Ovary (tissue), 10 donors: ENCODE measurements at regions of chr16 and their contacts with region 1.

Region 1: DNA sequence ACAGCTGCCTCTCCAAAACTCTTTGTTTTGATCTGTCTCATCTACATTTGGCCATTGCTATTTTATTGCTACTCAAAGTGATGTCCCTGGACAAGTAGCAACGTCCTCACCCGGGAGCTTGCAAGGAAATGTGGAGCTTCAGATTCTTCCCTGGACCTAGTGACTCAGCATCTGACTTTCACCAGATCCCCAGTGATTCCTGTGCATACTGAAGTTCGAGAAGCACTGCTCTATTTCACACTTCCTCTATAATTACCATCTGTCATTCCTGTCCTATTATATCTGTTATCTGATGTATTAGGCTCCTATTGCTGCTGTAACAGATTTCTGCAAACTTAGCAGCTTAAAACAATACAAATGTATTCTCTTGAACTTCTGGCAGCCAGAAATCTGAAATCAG is 28.5 kb upstream of the VAT1L start:
- DNase-seq: no peak
- H3K4me3 ChIP-seq: no peak overlapping the region
- H3K27ac ChIP-seq: no peak overlapping the region
- H3K4me1 ChIP-seq: peaks cover 9% of the 10 kb centered on the region
- H3K27me3 ChIP-seq: no peaks in the 10 kb centered on the region
- CTCF ChIP-seq: no peak
- EP300 ChIP-seq: no peak
- POLR2A ChIP-seq: no peak

Region 2: DNA sequence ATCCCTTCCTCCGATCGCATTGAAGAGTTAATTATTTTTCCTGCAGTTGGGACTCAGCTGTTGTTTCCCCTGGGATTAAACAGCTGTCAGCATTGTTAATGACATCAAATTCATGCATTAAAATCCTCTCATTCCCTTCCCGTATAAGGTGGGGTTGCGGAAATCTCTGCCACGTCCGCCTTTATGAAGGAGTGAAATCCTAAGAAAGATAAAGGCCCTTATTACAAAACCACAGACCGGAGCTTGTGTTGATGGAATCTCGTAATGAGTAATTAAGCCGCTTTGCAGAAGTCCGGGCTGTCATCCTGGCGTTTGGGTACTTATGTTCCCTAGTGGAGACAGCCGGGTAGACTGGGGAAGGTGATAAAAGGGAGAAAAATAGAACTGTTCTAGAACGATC is 1213.2 kb after region 1 on chr16:
- intact Hi-C with region 1: loop called in 1 of 4 experiments (anchors 10 kb)
- DNase-seq: no peak
- H3K4me3 ChIP-seq: no peak overlapping the region
- H3K27ac ChIP-seq: no peak overlapping the region
- H3K4me1 ChIP-seq: peaks cover 6% of the 10 kb centered on the region
- H3K27me3 ChIP-seq: no peaks in the 10 kb centered on the region
- CTCF ChIP-seq: no peak
- EP300 ChIP-seq: no peak
- POLR2A ChIP-seq: no peak